RWPE1 (cell line): ENCODE measurements at regions of chr3 and their contacts with region 1.

Region 1: DNA sequence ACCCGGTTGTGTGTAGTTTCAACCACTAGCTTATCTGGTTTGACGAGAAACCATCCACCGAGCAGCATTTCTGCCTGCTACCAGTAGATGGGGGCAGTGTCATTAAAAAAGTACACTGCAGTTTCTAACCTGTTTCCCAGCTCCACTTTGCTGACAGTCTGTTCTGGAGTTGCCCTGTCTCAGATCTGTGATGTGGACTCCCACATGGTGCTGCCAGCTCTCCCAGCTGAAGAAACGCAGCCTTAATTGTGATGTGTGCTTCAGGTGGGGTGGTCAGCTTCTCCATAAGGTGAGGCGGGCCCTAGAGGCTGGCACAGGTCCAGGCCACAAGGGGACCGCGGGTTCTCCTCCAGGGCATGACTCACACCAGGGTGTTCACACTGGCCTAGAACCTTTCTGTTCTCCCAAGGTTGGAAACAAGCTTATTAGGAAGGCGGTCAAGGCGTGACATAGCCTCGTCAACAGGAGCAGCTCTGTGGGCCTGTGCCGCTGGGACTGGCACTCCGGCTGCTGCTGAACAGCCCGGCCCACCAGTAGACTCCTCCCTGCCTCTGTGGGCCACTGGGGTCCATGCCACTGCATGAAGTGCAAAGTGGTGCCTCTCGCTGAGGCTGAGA is 2.9 kb upstream of the FAM43A start:
- DNase-seq: peak; percentile 93
- H3K27ac ChIP-seq: peak overlapping the region; percentile 78
- CTCF ChIP-seq: peak; percentile 88

Region 2: DNA sequence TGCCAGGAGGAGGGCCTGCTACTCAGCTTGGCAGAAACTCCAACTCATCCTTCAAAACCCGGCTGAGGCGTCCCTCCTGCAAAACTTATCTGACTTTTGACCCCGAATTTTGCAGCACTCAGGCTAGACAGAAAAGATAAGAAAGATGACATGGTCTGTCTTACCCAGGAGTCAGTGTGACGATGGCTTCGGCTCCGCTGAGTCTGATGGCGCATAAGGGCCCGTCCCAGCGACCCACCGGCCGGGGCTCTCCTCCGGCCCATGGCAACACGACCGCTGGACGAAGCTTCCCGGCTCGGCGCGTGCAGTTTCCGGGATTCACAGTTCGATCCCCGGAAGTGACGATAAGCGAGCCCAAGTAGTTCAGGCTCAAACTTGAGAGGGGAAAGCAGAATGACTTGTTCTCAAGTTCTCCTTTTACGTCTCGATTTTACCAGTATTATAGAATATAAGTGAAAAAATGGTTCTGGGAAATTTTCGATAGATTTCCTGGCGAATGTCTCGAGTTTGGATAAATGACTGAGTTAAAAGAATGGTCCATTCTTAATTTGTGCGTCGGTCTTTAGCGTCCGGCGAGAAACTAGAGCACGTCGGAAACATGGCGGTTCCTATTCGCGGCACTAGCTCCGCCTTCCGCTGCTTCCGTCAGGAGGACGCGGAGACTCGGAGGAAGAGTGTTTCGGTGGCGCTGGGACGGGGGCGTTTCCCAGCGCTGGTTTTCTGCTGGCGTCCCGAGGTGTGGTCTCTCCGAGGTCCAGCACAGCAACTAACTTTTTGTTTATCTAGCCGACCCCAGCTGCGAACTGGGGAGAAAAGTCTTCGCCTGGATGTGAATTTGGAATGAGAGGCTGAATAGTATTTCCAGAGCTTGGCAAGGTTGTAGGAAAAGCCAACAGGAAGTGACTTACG is 10.6 kb before region 1 on chr3 and contains the start of gene LSG1:
- CTCF ChIA-PET with region 1: interaction called, 14 read pairs
- POLR2A ChIA-PET with region 1: interaction called, 5 read pairs
- DNase-seq: peak; percentile 87
- H3K27ac ChIP-seq: peak within 1 kb of the TSS; percentile 74
- CTCF ChIP-seq: no peak

Region 3: GRCh38 chr3:194806991-194807630 is 124.3 kb after region 1 on chr3:
- CTCF ChIA-PET with region 1: no interaction called
- POLR2A ChIA-PET with region 1: no interaction called
- DNase-seq: peak; percentile 63
- H3K27ac ChIP-seq: no peak overlapping the region
- CTCF ChIP-seq: no peak

Region 4: GRCh38 chr3:195106418-195106906 is 423.7 kb after region 1 on chr3:
- CTCF ChIA-PET with region 1: interaction called, 17 read pairs
- POLR2A ChIA-PET with region 1: no interaction called
- DNase-seq: peak; percentile 63
- H3K27ac ChIP-seq: peak overlapping the region; percentile 33
- CTCF ChIP-seq: peak; percentile 99